H1 (cell line): ENCODE measurements at regions of chr17 and their contacts with region 1.

Region 1: GRCh38 chr17:81027591-81028505 is 7.1 kb upstream of the BAIAP2 start:
- DNase-seq: no peak
- H3K4me3 ChIP-seq: no peak overlapping the region
- H3K27ac ChIP-seq: no peak overlapping the region
- H3K4me1 ChIP-seq: no peaks in the 10 kb centered on the region
- H3K27me3 ChIP-seq: no peaks in the 10 kb centered on the region; a peak in 3 of 7 replicates
- CTCF ChIP-seq: no peak
- EP300 ChIP-seq: no peak
- POLR2A ChIP-seq: no peak
- RAD21 ChIP-seq: no peak

Region 2: DNA sequence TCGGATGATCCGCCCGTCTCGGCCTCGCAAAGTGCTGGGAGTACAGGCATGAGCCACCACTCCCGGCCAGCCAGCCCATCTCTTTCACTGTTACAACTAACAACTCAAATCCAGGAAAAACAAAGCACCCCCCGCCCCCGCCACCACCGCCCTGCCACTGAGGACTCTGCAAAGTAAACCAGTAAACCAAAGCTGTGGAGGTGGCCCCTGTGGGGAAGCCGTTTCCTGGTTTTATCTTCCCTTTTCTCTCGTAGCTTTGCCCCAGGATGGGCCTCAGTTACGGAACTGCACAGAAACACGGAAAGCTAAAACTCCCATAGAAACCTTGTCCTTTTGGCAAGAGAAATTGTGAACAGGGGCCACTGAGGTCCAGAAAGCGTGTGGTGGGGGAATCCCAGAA is 18.7 kb before region 1 on chr17:
- CTCF ChIA-PET with region 1: interaction called, 29 read pairs
- POLR2A ChIA-PET with region 1: interaction called, 3 read pairs
- DNase-seq: no peak
- H3K4me3 ChIP-seq: no peak overlapping the region
- H3K27ac ChIP-seq: no peak overlapping the region
- H3K4me1 ChIP-seq: peaks cover 0 to 4% (median 0%) of the 10 kb centered on the region in 4 experiments; a peak in 1 of 7 replicates
- H3K27me3 ChIP-seq: peaks cover 7 to 12% (median 9%) of the 10 kb centered on the region in 4 experiments; a peak in 6 of 7 replicates
- CTCF ChIP-seq: no peak
- EP300 ChIP-seq: no peak
- POLR2A ChIP-seq: no peak
- RAD21 ChIP-seq: no peak

Region 3: GRCh38 chr17:81040791-81041337 is 13.0 kb after region 1 on chr17:
- CTCF ChIA-PET with region 1: interaction called, 37 read pairs
- POLR2A ChIA-PET with region 1: interaction called, 41 read pairs
- DNase-seq: peak in 1 of 2 experiments; percentile 78
- H3K4me3 ChIP-seq: no peak overlapping the region
- H3K27ac ChIP-seq: no peak overlapping the region
- H3K4me1 ChIP-seq: peaks cover 0 to 17% (median 6%) of the 10 kb centered on the region in 4 experiments; a peak in 6 of 7 replicates
- H3K27me3 ChIP-seq: peaks cover 0 to 6% (median 0%) of the 10 kb centered on the region in 4 experiments; a peak in 3 of 7 replicates
- CTCF ChIP-seq: peak; percentile 73 to 91 (median 75)
- EP300 ChIP-seq: no peak
- POLR2A ChIP-seq: no peak
- RAD21 ChIP-seq: peak; percentile 42 to 44; a peak in 2 of 4 replicates

Region 4: DNA sequence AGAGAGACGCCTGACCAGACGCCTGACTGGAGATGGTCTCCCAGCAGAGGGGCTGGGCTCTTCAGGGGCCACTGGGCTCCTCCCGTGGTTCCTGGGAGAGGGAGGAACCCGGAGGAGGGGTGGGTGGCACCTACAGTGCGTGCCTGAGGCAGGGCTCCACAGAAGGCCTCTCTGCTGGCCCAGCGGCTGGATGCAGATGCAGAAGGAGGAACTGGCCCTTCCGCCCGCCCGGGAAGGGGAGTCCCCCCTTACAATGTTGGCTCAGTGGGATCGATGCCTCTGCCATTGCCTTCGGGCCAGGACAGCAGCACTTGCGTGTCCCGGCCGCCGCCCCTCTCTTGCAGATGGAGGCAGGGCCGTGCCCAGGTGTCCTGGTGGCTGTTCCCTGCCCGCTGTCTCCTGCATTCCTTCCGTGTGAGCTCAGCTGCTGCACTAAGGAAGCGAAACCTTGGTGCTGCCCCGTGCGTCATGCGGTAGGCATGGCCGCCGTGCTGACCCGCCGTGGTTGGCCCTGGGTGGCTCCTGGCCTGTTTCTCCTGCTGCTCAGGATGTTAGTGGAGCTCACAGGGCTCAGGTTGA is 22.2 kb after region 1 on chr17:
- CTCF ChIA-PET with region 1: interaction called, 37 read pairs
- POLR2A ChIA-PET with region 1: interaction called, 9 read pairs
- DNase-seq: no peak
- H3K4me3 ChIP-seq: no peak overlapping the region
- H3K27ac ChIP-seq: no peak overlapping the region; the same call in 1 of the 2 replicates
- H3K4me1 ChIP-seq: peaks cover 0 to 2% (median 0%) of the 10 kb centered on the region in 4 experiments; a peak in 1 of 7 replicates
- H3K27me3 ChIP-seq: no peaks in the 10 kb centered on the region
- CTCF ChIP-seq: no peak
- EP300 ChIP-seq: no peak
- POLR2A ChIP-seq: no peak
- RAD21 ChIP-seq: no peak

Region 5: GRCh38 chr17:81083125-81083765 is 55.4 kb after region 1 on chr17:
- CTCF ChIA-PET with region 1: interaction called, 16 read pairs
- POLR2A ChIA-PET with region 1: interaction called, 5 read pairs
- DNase-seq: no peak
- H3K4me3 ChIP-seq: no peak overlapping the region
- H3K27ac ChIP-seq: no peak overlapping the region
- H3K4me1 ChIP-seq: no peaks in the 10 kb centered on the region; a peak in 1 of 7 replicates
- H3K27me3 ChIP-seq: no peaks in the 10 kb centered on the region
- CTCF ChIP-seq: no peak
- EP300 ChIP-seq: no peak
- POLR2A ChIP-seq: no peak
- RAD21 ChIP-seq: no peak